Stomach (tissue), 19 donors: ENCODE measurements at regions of chr17 and their contacts with region 1.

Region 1: GRCh38 chr17:77083531-77083930 is 57.2 kb upstream of the SEC14L1 start:
- DNase-seq: no peak
- H3K4me3 ChIP-seq: no peak overlapping the region
- H3K27ac ChIP-seq: no peak overlapping the region
- H3K4me1 ChIP-seq: peaks cover 11 to 21% (median 16%) of the 10 kb centered on the region in 4 donors
- H3K27me3 ChIP-seq: peaks cover 0 to 19% (median 0%) of the 10 kb centered on the region in 3 donors
- CTCF ChIP-seq: no peak
- EP300 ChIP-seq: no peak
- POLR2A ChIP-seq: no peak

Region 2: DNA sequence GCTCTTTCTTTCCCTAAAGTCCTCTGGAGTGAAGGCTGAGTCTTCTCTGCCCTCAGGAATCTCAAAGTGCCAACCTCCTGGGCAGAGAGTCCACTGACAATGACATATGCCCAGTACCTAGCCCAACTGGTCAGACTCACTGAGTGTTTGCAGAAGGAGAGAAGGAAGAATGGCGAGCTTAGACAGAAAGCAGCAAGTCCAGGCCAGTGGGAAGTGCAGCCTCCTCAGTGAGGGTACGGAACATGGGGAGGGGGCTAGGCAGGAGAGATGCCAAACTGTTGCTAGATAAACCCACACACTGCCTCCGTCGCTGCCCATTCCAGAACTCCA is 980.6 kb before region 1 on chr17:
- intact Hi-C with region 1: no loop called
- DNase-seq: no peak
- H3K4me3 ChIP-seq: peak overlapping the region; percentile 91 to 94 (median 91)
- H3K27ac ChIP-seq: peak overlapping the region; percentile 69 to 86 (median 82)
- H3K4me1 ChIP-seq: peaks cover 16 to 48% (median 36%) of the 10 kb centered on the region in 4 donors
- H3K27me3 ChIP-seq: no peaks in the 10 kb centered on the region
- CTCF ChIP-seq: no peak
- EP300 ChIP-seq: no peak
- POLR2A ChIP-seq: no peak

Region 3: GRCh38 chr17:77019955-77020379 is 63.6 kb before region 1 on chr17:
- intact Hi-C with region 1: no loop called
- DNase-seq: no peak
- H3K4me3 ChIP-seq: no peak overlapping the region
- H3K27ac ChIP-seq: no peak overlapping the region
- H3K4me1 ChIP-seq: no peaks in the 10 kb centered on the region
- H3K27me3 ChIP-seq: peaks cover 0 to 23% (median 0%) of the 10 kb centered on the region in 3 donors
- CTCF ChIP-seq: no peak
- EP300 ChIP-seq: no peak
- POLR2A ChIP-seq: no peak

Region 4: GRCh38 chr17:77247048-77247541 is 163.6 kb after region 1 on chr17:
- intact Hi-C with region 1: loop called (anchors 5 kb)
- DNase-seq: peak; percentile 89 to 94
- H3K4me3 ChIP-seq: peak overlapping the region; percentile 52 to 64 (median 58)
- H3K27ac ChIP-seq: peak overlapping the region in 4 of 5 donors; percentile 22 to 82 (median 63)
- H3K4me1 ChIP-seq: peaks cover 12 to 19% (median 13%) of the 10 kb centered on the region in 4 donors
- H3K27me3 ChIP-seq: peaks cover 0 to 16% (median 0%) of the 10 kb centered on the region in 3 donors
- CTCF ChIP-seq: peak in 6 of 7 experiments; percentile 67 to 99 (median 97)
- EP300 ChIP-seq: no peak
- POLR2A ChIP-seq: no peak